ENCODE measurements at regions of chr1 and their contacts with region 1.

Region 1: DNA sequence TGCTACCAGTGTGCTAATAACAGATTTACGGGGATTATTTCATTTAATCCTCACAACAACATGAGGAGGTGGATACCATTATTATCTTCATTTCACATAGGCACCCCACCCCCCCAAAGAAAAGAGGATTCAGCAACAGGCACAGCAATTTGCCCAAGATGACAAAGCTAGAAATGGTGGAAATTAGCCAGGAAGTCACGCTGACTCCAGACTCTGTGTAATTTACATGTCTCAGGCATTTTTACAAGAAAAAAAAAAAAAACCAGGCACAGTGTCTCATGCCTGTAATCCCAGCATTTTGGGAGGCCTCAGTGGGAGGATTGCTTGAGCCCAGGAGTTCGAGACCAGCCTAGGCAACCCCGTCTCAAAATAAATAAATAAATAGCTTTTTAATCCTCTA is 37.5 kb upstream of the PRDM2 start:
- DNase-seq: no peak
- ATAC-seq: no peak
- H3K4me3 ChIP-seq: no peak overlapping the region
- H3K27ac ChIP-seq: no peak overlapping the region
- H3K4me1 ChIP-seq: no peaks in the 10 kb centered on the region
- H3K27me3 ChIP-seq: no peaks in the 10 kb centered on the region

Region 2: DNA sequence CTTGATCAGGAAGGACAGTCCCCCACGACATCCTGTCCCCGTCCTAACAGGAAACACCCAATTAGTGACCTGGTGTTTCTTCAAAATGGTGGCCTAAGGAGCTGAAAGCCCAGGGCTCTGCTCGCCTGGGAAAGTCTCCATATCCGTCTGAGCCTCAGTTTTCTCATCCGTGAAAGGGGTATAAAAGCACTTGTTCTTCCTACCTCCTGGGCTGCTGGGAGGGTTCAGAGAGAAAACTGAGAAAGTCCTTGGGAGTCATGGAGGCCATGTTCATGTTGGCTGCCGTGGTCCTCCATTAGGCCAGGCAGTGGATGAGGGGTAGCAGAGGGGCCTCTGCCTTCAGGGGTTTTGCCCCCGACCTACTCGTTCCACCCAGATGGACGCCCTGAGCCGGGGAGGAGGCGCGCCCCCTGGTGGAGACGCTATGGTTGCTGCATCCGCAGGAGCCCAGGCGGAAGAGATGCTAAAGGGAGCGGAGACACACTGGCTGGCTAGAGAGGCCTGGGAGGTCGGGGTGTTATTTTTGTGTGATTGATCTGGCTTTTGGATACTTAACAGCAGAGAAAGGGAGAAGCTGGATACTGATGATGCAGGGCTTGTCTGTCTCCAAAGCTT is 151.0 kb after region 1 on chr1:
- intact Hi-C with region 1: loop called (anchors 2 to 10 kb)
- DNase-seq: peak in 1 of 2 donors; percentile 86
- ATAC-seq: peak; percentile 34
- H3K4me3 ChIP-seq: no peak overlapping the region
- H3K27ac ChIP-seq: no peak overlapping the region
- H3K4me1 ChIP-seq: no peaks in the 10 kb centered on the region
- H3K27me3 ChIP-seq: no peaks in the 10 kb centered on the region

Region 3: GRCh38 chr1:13960375-13960987 is 298.0 kb after region 1 on chr1:
- intact Hi-C with region 1: loop called (anchors 1 kb)
- DNase-seq: peak; percentile 64 to 85
- ATAC-seq: peak; percentile 81
- H3K4me3 ChIP-seq: no peak overlapping the region
- H3K27ac ChIP-seq: no peak overlapping the region
- H3K4me1 ChIP-seq: no peaks in the 10 kb centered on the region
- H3K27me3 ChIP-seq: no peaks in the 10 kb centered on the region

Region 4: DNA sequence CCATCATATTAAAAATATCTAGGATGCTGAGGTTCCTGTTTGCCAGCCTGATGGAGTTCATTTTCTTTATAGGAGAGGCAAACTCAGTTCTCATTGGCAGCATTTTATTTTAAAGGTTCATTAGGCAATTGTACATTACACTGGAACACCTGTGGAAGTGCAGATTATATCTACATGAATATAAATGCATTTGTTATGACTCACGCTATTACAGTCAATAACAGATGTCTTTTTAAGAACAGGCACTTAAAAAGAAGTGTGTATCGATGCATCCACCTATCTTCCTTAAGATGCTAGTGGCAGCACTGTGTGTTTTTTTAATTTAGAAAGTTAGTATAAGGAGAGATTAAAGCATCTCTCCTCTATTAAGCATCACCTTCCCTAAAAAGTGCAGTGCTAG is 314.0 kb after region 1 on chr1:
- intact Hi-C with region 1: no loop called
- DNase-seq: no peak
- ATAC-seq: no peak
- H3K4me3 ChIP-seq: no peak overlapping the region
- H3K27ac ChIP-seq: no peak overlapping the region
- H3K4me1 ChIP-seq: no peaks in the 10 kb centered on the region
- H3K27me3 ChIP-seq: no peaks in the 10 kb centered on the region